Prostate gland (tissue), 2 donors: ENCODE measurements at regions of chr9 and their contacts with region 1.

Region 1: GRCh38 chr9:137521405-137521985 is 28.7 kb downstream of the PNPLA7 start:
- DNase-seq: no peak
- H3K4me3 ChIP-seq: no peak overlapping the region
- H3K27ac ChIP-seq: no peak overlapping the region
- H3K4me1 ChIP-seq: no peaks in the 10 kb centered on the region
- H3K27me3 ChIP-seq: no peaks in the 10 kb centered on the region
- CTCF ChIP-seq: no peak
- POLR2A ChIP-seq: no peak

Region 2: GRCh38 chr9:136728080-136728547 is 793.4 kb before region 1 on chr9:
- intact Hi-C with region 1: no loop called
- DNase-seq: peak; percentile 83
- H3K4me3 ChIP-seq: peak overlapping the region; percentile 78 to 84
- H3K27ac ChIP-seq: peak overlapping the region; percentile 62 to 78
- H3K4me1 ChIP-seq: peaks cover 14% of the 10 kb centered on the region
- H3K27me3 ChIP-seq: no peaks in the 10 kb centered on the region
- CTCF ChIP-seq: peak; percentile 94 to 100 (median 98)
- POLR2A ChIP-seq: peak; percentile 94

Region 3: DNA sequence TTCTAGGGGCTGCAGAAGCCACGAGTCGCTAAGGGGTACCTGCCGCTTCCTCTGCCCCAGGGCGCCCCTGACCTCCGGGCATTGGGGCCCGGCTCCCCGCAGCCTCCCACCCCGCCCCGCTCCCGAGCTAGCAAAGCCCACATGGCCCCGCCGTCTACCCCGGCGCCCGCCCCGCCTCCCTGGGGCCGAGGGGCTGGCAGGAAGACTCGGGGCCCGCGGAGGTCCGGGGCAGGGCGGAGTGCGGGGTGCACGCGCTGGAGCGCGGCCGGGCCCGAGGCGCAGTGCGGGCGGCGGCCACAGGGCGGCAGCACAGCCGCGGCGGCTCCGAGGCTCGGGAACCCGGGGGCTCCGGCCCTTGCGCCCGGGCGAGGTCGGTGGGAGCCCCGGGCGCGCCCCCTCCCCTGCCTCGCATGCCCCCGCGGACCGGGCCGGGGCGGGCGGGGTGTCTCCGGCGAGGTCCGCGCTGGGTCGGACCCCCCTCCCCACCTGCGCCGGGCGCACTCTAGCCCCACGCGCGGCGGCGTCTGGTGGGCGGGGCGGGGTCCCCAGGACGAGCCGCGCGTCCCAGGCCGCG is 226.2 kb before region 1 on chr9:
- intact Hi-C with region 1: loop called (anchors 10 kb)
- DNase-seq: no peak
- H3K4me3 ChIP-seq: peak overlapping the region; percentile 31 to 51
- H3K27ac ChIP-seq: peak overlapping the region; percentile 72 to 94
- H3K4me1 ChIP-seq: peaks cover 12% of the 10 kb centered on the region
- H3K27me3 ChIP-seq: no peaks in the 10 kb centered on the region
- CTCF ChIP-seq: peak; percentile 42 to 93 (median 68)
- POLR2A ChIP-seq: no peak

Region 4: DNA sequence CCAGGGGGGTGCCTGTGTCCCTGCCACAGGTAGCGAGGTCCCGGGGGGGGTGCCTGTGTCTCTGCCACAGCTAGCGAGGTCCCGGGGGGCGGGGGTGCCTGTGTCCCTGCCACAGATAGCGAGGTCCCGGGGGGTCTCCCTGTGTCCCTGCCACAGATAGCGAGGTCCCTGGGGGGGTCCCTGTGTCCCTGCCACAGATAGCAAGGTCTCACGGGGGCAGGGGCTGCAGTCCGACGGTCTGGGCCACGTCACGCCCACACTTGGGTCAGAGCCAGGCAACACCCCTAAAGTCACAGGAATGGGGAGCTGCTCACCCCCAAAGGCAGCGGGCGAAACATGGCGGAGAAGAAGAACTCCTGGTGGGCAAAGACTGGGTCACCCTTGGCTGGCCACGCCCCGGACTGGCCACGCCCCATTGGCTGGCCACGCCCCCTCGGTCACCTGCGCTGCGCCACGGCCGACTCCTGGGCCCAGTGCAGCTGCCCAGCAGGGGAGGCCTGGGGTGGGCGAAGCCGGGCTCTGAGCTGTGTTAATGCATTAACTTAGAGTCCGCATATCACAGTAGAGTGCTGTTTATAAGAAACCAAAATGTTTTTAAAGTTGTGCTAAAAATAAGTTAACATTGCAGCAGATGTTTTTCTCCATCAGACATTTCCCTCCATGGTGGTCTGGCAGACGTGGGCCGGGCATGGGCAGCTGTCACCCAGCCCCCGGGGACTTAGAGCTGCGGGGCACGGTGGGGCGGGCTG is 91.3 kb before region 1 on chr9:
- intact Hi-C with region 1: loop called (anchors 5 kb)
- DNase-seq: no peak
- H3K4me3 ChIP-seq: no peak overlapping the region
- H3K27ac ChIP-seq: no peak overlapping the region
- H3K4me1 ChIP-seq: no peaks in the 10 kb centered on the region
- H3K27me3 ChIP-seq: no peaks in the 10 kb centered on the region
- CTCF ChIP-seq: no peak
- POLR2A ChIP-seq: no peak